HEK293T (cell line): ENCODE measurements at regions of chr20 and their contacts with region 1.

Region 1: DNA sequence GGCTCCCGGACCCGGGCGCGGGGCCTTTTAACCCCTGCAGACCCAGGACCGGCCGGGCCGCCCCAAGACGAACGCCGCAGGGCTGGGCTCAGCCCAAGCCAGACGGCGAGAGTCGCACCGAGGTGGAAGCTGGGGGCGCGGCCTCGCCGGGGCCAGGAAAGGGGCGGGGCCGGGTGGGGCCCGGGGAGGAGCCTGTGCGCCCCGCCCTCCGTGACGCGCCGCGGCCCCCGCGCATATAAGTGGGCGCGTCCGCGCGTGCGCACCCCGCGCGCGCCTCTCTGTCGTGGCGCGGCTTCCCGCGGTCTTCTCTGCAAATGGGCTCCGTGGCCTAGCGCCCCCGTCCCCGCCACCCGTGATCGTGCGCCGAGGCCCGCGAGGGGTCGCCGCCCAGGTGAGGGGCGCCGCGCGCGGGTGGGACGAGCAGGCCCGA is at the start of gene PPDPF:
- DNase-seq: peak; percentile 98

Region 2: GRCh38 chr20:63377256-63377941 is 143.1 kb before region 1 on chr20:
- CTCF ChIA-PET with region 1: no interaction called
- POLR2A ChIA-PET with region 1: no interaction called
- DNase-seq: peak; percentile 36

Region 3: DNA sequence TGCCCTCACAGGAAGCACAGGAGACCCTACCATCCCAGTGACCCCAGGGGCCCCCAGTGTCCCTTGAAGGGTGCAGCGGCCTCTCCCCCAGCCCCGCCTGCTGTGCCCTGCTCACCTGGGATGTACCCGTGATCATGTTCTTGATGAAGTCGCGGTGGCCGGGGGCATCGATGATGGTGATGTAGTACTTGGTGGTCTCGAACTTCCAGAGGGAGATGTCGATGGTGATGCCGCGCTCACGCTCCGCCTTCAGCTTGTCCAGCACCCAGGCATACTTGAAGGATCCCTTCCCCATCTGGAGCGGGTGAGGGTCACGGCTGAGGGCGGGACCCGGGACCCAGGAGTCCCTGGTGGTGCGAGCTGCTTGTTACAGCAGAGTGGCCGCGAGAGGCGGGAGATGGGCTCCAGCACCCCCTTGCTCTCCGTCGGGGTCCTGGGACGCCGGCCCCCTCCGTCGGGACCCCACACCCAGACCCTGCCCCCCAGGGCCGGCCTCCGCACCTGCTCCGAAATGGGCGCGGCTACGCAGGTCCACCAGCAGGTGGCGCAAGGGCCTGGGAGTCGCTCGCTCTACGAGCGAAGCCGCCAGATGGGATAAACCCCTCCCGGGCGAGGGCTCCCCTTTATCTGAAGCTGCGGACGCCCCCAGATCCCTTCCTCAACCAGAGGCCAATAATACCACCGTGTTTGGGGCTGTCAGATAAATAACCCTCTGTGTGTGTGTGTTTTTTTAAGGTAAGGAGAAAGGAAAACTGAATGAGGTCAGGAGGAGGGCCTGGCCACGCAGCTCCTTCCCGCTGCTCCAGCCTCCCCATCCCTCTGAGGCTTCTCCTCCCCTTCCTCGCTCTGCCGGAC is 24.6 kb before region 1 on chr20:
- CTCF ChIA-PET with region 1: interaction called, 5 read pairs
- POLR2A ChIA-PET with region 1: interaction called, 26 read pairs
- DNase-seq: peak; percentile 77

Region 4: DNA sequence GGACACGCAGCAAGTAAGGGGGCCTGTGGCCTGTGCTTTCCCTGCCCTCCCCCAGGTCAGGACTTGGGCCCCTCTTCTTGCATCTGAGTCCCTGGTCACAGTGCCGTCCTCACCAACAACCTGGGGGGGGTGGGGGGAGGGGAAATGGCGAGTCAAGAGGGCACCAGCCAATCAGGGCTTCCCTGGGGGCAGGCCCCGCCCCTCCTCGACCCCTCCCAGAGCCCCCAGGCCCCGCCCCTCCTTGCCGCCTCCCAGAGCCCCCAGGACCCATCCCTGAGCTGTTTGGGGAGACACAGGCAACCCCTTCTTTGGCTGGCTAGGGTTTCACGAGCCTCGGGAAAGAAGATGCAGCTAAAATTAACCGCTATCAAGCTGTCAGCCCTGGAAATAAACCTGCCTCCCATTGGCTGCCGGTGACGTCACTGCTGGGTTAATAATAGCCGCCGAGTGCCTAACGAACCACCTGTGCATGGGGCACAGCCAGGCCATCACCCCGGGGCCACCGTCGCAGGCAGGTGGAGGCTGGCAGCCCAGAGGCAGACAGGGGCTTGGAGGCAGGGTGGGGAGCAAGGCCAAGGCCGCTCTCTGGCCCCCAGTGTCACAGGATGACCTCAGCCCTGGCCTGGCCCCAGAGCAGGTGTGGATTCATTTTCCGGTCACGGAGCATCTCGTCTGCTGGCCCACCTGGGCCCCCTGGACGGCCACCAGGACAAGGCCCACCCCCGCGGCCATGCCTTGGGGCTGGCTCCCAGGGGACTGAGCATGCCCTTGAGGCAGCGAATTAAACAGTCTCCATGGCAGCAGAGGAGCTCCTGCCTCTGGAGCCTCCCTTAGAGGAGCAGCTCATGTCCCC is 18.5 kb before region 1 on chr20:
- CTCF ChIA-PET with region 1: interaction called, 5 read pairs
- POLR2A ChIA-PET with region 1: interaction called, 26 read pairs
- DNase-seq: peak; percentile 61

Region 5: GRCh38 chr20:63602321-63602720 is 81.8 kb after region 1 on chr20:
- CTCF ChIA-PET with region 1: no interaction called
- POLR2A ChIA-PET with region 1: no interaction called
- DNase-seq: no peak